ENCODE measurements at regions of chr11 and their contacts with region 1.

Region 1: GRCh38 chr11:27213232-27213660 is 149.8 kb downstream of the CCDC34 start:
- DNase-seq: peak in 1 of 2 donors; percentile 21
- ATAC-seq: peak in 7 of 8 donors; percentile 30 to 60 (median 47)
- H3K4me3 ChIP-seq: no peak overlapping the region
- H3K27ac ChIP-seq: peak overlapping the region in 8 of 10 donors; percentile 5 to 75 (median 46)
- H3K4me1 ChIP-seq: peaks cover 0 to 71% (median 47%) of the 10 kb centered on the region in 9 donors
- H3K27me3 ChIP-seq: no peaks in the 10 kb centered on the region
- CTCF ChIP-seq: no peak

Region 2: GRCh38 chr11:27246925-27247324 is 33.7 kb after region 1 on chr11:
- intact Hi-C with region 1: loop called in 1 of 10 experiments (anchors 2 kb)
- DNase-seq: peak in 1 of 2 donors; percentile 18
- ATAC-seq: peak in 7 of 8 donors; percentile 31 to 81 (median 65)
- H3K4me3 ChIP-seq: no peak overlapping the region
- H3K27ac ChIP-seq: peak overlapping the region in 7 of 10 donors; percentile 24 to 84 (median 55)
- H3K4me1 ChIP-seq: peaks cover 0 to 42% (median 25%) of the 10 kb centered on the region in 9 donors
- H3K27me3 ChIP-seq: no peaks in the 10 kb centered on the region
- CTCF ChIP-seq: no peak

Region 3: GRCh38 chr11:27370374-27370773 is 157.1 kb after region 1 on chr11:
- intact Hi-C with region 1: no loop called
- DNase-seq: no peak
- ATAC-seq: no peak
- H3K4me3 ChIP-seq: no peak overlapping the region
- H3K27ac ChIP-seq: no peak overlapping the region
- H3K4me1 ChIP-seq: no peaks in the 10 kb centered on the region
- H3K27me3 ChIP-seq: no peaks in the 10 kb centered on the region
- CTCF ChIP-seq: no peak

Measured in heart right ventricle (tissue), 16 donors.